ENCODE measurements at regions of chr21 and their contacts with region 1.

Region 1: GRCh38 chr21:45074048-45074817 is at the start of gene ADARB1:
- DNase-seq: peak; percentile 75
- ATAC-seq: peak; percentile 13
- H3K4me3 Mint-ChIP-seq: peak within 1 kb of the TSS; percentile 88
- H3K27ac Mint-ChIP-seq: peak within 1 kb of the TSS; percentile 91
- H3K4me1 Mint-ChIP-seq: peaks cover 42% of the 10 kb centered on the region
- H3K27me3 Mint-ChIP-seq: no peaks in the 10 kb centered on the region
- total RNA-seq, gene ADARB1: 32.8 to 37.7 TPM

Region 2: GRCh38 chr21:44927587-44928461 is 146.4 kb before region 1 on chr21:
- CTCF ChIA-PET with region 1: interaction called, 3 read pairs
- POLR2A ChIA-PET with region 1: no interaction called
- intact Hi-C with region 1: loop called (anchors 5 kb)
- DNase-seq: peak; percentile 97
- ATAC-seq: peak; percentile 74
- H3K4me3 Mint-ChIP-seq: peak overlapping the region; percentile 90
- H3K27ac Mint-ChIP-seq: peak overlapping the region; percentile 94
- H3K4me1 Mint-ChIP-seq: peaks cover 80% of the 10 kb centered on the region
- H3K27me3 Mint-ChIP-seq: no peaks in the 10 kb centered on the region

Region 3: GRCh38 chr21:45109831-45110492 is 35.7 kb after region 1 on chr21:
- CTCF ChIA-PET with region 1: interaction called, 5 read pairs
- POLR2A ChIA-PET with region 1: interaction called, 3 read pairs
- intact Hi-C with region 1: loop called (anchors 1 to 2 kb)
- DNase-seq: peak; percentile 70
- ATAC-seq: peak; percentile 59
- H3K4me3 Mint-ChIP-seq: peak overlapping the region; percentile 62
- H3K27ac Mint-ChIP-seq: peak overlapping the region; percentile 74
- H3K4me1 Mint-ChIP-seq: peaks cover 76% of the 10 kb centered on the region
- H3K27me3 Mint-ChIP-seq: no peaks in the 10 kb centered on the region

Region 4: DNA sequence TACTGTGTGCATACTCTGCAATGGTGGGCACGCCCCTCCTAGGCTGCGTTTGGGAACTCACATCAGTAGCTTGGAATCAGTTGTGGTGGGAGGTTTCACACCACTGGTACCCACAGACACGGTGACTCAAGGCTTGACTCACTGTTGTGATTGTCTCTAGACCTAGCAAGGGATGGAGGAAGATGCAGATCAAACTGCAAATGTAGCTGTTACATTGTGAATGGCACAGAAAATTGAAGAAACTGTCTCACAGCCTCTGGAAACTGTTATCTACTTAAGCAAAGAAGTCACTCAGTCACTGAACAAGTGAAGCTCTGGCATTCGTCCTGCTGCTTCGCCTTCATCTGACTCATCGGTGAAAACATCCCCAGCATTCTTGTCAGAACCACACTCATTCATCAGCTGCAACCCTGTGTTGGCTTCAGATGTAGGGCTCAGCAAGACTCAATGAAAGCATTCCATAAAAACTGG is 154.0 kb after region 1 on chr21:
- CTCF ChIA-PET with region 1: no interaction called
- POLR2A ChIA-PET with region 1: no interaction called
- intact Hi-C with region 1: loop called in 1 of 2 experiments (anchors 5 kb)
- DNase-seq: peak; percentile 90
- ATAC-seq: peak; percentile 91
- H3K4me3 Mint-ChIP-seq: no peak overlapping the region
- H3K27ac Mint-ChIP-seq: no peak overlapping the region
- H3K4me1 Mint-ChIP-seq: peaks cover 48% of the 10 kb centered on the region
- H3K27me3 Mint-ChIP-seq: no peaks in the 10 kb centered on the region

Region 5: DNA sequence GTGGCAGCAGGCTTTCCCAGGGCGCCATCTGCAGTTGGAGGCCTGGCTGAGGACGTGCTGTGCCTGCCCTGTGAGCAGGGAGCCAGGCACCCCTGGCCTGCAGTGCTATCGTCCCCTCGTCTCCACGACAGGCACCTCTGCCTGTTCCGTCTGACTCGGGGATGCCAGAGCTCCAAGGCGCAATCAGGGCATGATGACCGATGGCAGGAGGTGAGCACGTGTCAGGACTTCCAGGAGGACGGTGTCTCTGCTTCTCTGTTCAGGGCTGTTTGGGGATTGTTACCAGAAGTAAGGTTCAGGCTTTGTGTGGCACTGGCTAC is 694.5 kb after region 1 on chr21:
- CTCF ChIA-PET with region 1: no interaction called
- POLR2A ChIA-PET with region 1: no interaction called
- intact Hi-C with region 1: loop called in 1 of 2 experiments (anchors 2 kb)
- DNase-seq: peak; percentile 64
- ATAC-seq: peak; percentile 3
- H3K4me3 Mint-ChIP-seq: peak overlapping the region; percentile 62
- H3K27ac Mint-ChIP-seq: peak overlapping the region; percentile 98
- H3K4me1 Mint-ChIP-seq: peaks cover 57% of the 10 kb centered on the region
- H3K27me3 Mint-ChIP-seq: no peaks in the 10 kb centered on the region